ENCODE measurements at regions of chr12 and their contacts with region 1.

Region 1: GRCh38 chr12:14960548-14961465 is 594 bp downstream of the ARHGDIB start:
- DNase-seq: peak; percentile 58
- H3K4me3 Mint-ChIP-seq: peak overlapping the region; percentile 96
- H3K27ac Mint-ChIP-seq: peak overlapping the region; percentile 96
- H3K4me1 Mint-ChIP-seq: peaks cover 50% of the 10 kb centered on the region
- H3K27me3 Mint-ChIP-seq: no peaks in the 10 kb centered on the region

Region 2: DNA sequence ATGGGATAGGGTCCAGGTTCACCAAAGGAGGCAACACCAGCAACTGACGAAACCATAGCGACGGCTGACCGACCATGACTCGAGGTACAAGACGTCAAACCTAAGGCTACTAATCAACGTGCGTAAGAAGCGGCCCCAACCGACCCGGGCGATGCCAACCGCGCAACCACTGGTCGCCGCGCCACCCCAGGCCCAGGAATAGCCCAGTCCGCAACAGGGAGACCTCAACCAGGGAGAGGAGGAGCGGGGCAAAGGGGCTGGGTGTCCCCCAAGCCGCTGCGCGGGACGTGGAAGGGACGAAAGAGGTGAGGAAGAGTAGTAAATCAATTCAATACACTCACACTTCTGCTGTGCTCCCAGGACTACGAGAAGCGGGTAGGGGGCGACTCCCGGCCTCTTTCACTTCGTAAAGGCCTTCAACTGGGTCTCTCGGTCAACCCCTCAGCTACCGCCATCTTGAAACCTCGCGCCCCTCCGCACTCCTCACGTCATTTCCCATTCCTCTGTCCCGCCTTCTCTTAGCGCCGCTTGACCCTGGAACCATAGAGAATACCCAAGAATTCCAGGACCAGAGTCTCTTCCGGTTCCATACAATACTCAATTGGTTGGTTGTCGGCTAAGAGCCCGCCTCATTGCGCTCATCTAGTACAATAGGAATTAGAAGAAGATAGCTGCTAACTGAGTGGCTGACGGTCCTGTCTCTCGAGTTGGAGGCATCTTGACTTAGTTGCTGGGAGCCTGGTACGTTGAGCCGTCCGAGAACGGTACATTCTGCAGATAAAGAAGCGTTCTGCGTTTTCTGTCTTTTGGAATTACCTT is 157.6 kb before region 1 on chr12 and contains the starts of genes C12orf60 and WBP11:
- CTCF ChIA-PET with region 1: interaction called, 4 read pairs
- POLR2A ChIA-PET with region 1: interaction called, 23 read pairs
- DNase-seq: peak; percentile 89
- H3K4me3 Mint-ChIP-seq: no peak within 1 kb of the TSS
- H3K27ac Mint-ChIP-seq: no peak within 1 kb of the TSS
- H3K4me1 Mint-ChIP-seq: peaks cover 27% of the 10 kb centered on the region
- H3K27me3 Mint-ChIP-seq: no peaks in the 10 kb centered on the region
- total RNA-seq, gene C12orf60: 2.0 to 2.4 TPM
- total RNA-seq, gene WBP11: 91.1 to 92.7 TPM

Region 3: DNA sequence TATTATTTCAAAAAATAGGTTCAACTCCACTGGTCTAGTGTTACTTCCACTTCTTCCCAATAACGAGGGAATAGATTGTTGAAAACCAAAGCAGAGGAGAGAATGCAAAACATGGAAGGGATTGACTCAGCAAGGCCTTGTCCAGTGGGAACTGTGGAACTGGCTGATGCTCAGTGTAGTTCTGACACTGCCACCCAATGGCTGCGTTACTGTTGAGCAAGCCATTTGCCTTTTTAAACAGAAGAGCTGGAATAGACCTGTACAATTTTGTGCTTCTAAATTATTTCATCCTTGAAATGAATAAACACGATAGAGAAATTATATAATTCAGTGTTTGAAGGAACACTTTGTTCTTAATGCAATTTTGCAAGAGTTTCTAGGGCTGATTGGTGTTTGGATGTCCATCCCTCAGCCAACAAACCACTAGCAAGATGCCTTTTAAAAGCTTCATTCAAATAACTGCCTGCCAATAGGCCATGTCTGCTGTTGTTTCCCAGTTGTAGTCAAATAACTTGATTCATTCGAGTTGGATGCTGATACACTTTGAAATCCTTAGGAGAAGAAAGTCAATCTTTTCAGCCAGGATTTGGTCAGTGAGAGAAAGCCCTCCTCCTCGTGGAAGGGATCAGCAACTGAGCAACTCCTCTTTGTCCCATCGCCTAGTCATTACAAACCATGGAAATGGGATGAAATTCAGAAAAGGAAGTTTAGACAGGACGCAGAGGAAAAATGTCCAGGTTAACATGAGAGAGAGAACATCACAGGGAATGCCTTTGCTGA is 67.9 kb before region 1 on chr12:
- CTCF ChIA-PET with region 1: no interaction called
- POLR2A ChIA-PET with region 1: no interaction called
- DNase-seq: no peak
- H3K4me3 Mint-ChIP-seq: no peak overlapping the region
- H3K27ac Mint-ChIP-seq: no peak overlapping the region
- H3K4me1 Mint-ChIP-seq: no peaks in the 10 kb centered on the region
- H3K27me3 Mint-ChIP-seq: peaks cover 15% of the 10 kb centered on the region

Region 4: GRCh38 chr12:14903386-14904098 is 57.3 kb before region 1 on chr12:
- CTCF ChIA-PET with region 1: no interaction called
- POLR2A ChIA-PET with region 1: no interaction called
- DNase-seq: no peak
- H3K4me3 Mint-ChIP-seq: no peak overlapping the region
- H3K27ac Mint-ChIP-seq: no peak overlapping the region
- H3K4me1 Mint-ChIP-seq: peaks cover 9% of the 10 kb centered on the region
- H3K27me3 Mint-ChIP-seq: no peaks in the 10 kb centered on the region

Region 5: DNA sequence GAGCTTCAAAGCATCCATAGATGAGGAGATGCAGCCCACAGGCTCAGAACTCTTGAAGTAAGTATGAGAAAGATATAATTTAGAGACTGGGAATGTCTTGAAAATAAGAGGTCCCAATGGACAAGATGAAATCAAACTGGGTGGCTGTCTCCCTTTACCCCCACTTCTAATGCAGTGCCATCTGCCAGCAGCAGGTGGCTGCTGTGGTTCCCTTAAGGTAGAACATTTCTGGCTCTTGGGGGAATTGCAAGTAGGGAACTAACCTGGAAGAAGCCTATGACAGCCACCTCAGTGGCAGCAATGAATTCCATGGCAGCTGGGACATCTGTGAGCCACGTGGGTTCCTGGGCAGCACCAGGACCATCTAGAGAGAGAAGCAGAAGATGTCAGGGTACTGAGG is 23.1 kb before region 1 on chr12:
- CTCF ChIA-PET with region 1: interaction called, 10 read pairs
- POLR2A ChIA-PET with region 1: interaction called, 11 read pairs
- DNase-seq: no peak
- H3K4me3 Mint-ChIP-seq: no peak overlapping the region
- H3K27ac Mint-ChIP-seq: peak overlapping the region; percentile 21
- H3K4me1 Mint-ChIP-seq: peaks cover 20% of the 10 kb centered on the region
- H3K27me3 Mint-ChIP-seq: no peaks in the 10 kb centered on the region

Region 6: DNA sequence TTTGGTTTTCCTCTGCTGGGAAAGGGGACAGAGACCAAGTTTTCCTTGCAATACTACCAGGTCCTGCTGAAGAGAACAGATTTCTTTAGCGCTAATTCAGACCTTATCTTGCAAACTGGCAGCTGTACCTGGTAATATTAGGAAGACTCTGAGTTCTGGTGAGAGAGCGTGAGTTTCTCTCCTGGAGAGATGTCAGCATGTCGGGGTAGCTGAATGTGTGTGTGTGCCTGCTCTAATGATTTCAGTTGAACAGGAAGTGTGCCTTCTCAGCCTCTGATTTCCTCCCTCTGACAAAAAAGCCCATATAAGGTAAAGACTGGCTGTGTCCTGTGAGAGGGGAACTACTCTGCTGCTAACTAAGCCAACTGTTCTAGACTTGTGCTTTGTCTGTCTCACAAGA is 12.1 kb before region 1 on chr12:
- CTCF ChIA-PET with region 1: interaction called, 6 read pairs
- POLR2A ChIA-PET with region 1: interaction called, 110 read pairs
- DNase-seq: peak; percentile 66
- H3K4me3 Mint-ChIP-seq: peak overlapping the region; percentile 76
- H3K27ac Mint-ChIP-seq: peak overlapping the region; percentile 96
- H3K4me1 Mint-ChIP-seq: peaks cover 88% of the 10 kb centered on the region
- H3K27me3 Mint-ChIP-seq: no peaks in the 10 kb centered on the region

Region 7: GRCh38 chr12:14972816-14973215 is 12.0 kb after region 1 on chr12 and contains the start of gene PDE6H:
- CTCF ChIA-PET with region 1: no interaction called
- POLR2A ChIA-PET with region 1: interaction called, 15 read pairs
- DNase-seq: no peak
- H3K4me3 Mint-ChIP-seq: no peak within 1 kb of the TSS
- H3K27ac Mint-ChIP-seq: no peak within 1 kb of the TSS
- H3K4me1 Mint-ChIP-seq: peaks cover 17% of the 10 kb centered on the region
- H3K27me3 Mint-ChIP-seq: peaks cover 2% of the 10 kb centered on the region
- total RNA-seq, gene PDE6H: not detected

Region 8: DNA sequence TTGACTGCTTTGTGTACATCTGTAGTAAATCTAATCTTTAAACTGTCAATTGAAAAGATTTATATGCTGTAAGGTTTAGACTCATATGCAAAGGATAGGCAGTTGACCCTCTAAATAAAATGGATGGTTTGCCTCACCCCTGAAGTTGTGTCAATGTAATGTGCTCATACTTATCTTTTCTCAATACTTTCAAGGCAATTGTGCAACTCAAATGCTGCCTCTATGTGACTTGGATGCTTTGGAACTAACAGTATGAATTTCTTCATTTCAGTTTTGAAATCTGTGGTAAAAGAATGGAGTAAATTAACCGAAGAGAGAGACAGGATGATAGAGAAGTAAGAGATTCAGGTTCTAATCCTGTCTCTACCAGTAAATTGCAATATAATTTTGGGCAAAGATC is 21.8 kb after region 1 on chr12:
- CTCF ChIA-PET with region 1: no interaction called
- POLR2A ChIA-PET with region 1: interaction called, 11 read pairs
- DNase-seq: no peak
- H3K4me3 Mint-ChIP-seq: no peak overlapping the region
- H3K27ac Mint-ChIP-seq: peak overlapping the region; percentile 55
- H3K4me1 Mint-ChIP-seq: peaks cover 58% of the 10 kb centered on the region
- H3K27me3 Mint-ChIP-seq: no peaks in the 10 kb centered on the region

Region 9: DNA sequence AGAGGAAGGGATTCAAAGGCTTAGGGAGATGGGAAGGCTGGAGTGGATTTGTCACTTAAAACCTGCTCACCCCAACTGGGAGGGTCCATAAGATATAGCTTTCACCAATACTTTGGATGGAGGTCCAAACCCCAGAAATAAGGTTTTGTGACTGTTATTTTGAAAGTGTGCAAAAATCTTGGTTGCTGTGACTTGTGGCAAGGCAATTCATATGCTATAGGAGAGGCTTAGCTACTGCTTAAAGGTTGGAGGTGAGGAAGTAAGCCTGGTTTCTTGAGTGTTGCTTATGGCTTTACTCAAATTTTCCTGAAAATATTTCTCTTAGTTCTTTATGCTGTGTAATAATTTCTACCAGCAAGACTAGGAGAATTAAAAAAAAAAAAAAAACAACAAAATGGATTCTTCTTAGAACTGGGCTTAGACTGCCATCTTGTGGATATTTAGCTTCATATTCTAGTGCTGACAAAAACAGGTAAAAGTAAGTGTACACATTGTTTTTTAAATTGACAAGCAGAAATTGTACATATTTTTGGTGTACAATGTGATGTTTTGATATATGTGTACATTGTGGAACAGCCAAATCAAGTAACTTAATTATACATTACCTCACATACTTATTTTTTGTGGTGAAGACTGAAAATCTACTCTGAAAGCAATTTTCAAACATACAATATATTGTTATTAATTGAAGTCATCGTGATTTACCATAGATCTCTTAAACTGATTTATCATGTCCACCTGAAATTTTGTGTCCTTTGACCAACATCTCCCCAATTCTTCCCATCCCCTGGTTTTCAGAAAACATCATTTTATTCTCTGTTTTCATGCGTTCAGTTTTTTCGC is 35.0 kb after region 1 on chr12:
- CTCF ChIA-PET with region 1: interaction called, 5 read pairs
- POLR2A ChIA-PET with region 1: interaction called, 17 read pairs
- DNase-seq: no peak
- H3K4me3 Mint-ChIP-seq: no peak overlapping the region
- H3K27ac Mint-ChIP-seq: no peak overlapping the region
- H3K4me1 Mint-ChIP-seq: peaks cover 24% of the 10 kb centered on the region
- H3K27me3 Mint-ChIP-seq: peaks cover 23% of the 10 kb centered on the region

Region 10: GRCh38 chr12:15020156-15020555 is 59.3 kb after region 1 on chr12:
- CTCF ChIA-PET with region 1: no interaction called
- POLR2A ChIA-PET with region 1: no interaction called
- DNase-seq: no peak
- H3K4me3 Mint-ChIP-seq: no peak overlapping the region
- H3K27ac Mint-ChIP-seq: no peak overlapping the region
- H3K4me1 Mint-ChIP-seq: no peaks in the 10 kb centered on the region
- H3K27me3 Mint-ChIP-seq: peaks cover 12% of the 10 kb centered on the region

Region 11: GRCh38 chr12:15052691-15053090 is 91.9 kb after region 1 on chr12:
- CTCF ChIA-PET with region 1: no interaction called
- POLR2A ChIA-PET with region 1: no interaction called
- DNase-seq: no peak
- H3K4me3 Mint-ChIP-seq: no peak overlapping the region
- H3K27ac Mint-ChIP-seq: no peak overlapping the region
- H3K4me1 Mint-ChIP-seq: peaks cover 3% of the 10 kb centered on the region
- H3K27me3 Mint-ChIP-seq: peaks cover 2% of the 10 kb centered on the region